A673 (cell line): ENCODE measurements at regions of chr5 and their contacts with region 1.

Region 1: GRCh38 chr5:134637161-134637582 is 4.5 kb upstream of the SAR1B start:
- DNase-seq: no peak
- H3K4me3 ChIP-seq: no peak overlapping the region
- H3K27ac ChIP-seq: no peak overlapping the region
- H3K4me1 ChIP-seq: no peaks in the 10 kb centered on the region
- H3K27me3 ChIP-seq: no peaks in the 10 kb centered on the region
- CTCF ChIP-seq: no peak

Region 2: GRCh38 chr5:134541736-134542376 is 95.3 kb before region 1 on chr5:
- CTCF ChIA-PET with region 1: no interaction called
- POLR2A ChIA-PET with region 1: no interaction called
- intact Hi-C with region 1: no loop called
- DNase-seq: no peak
- H3K4me3 ChIP-seq: no peak overlapping the region
- H3K27ac ChIP-seq: no peak overlapping the region
- H3K4me1 ChIP-seq: peaks cover 24% of the 10 kb centered on the region
- H3K27me3 ChIP-seq: no peaks in the 10 kb centered on the region
- CTCF ChIP-seq: no peak

Region 3: GRCh38 chr5:134648425-134649162 is 11.4 kb after region 1 on chr5 and contains the start of gene SEC24A:
- CTCF ChIA-PET with region 1: no interaction called
- POLR2A ChIA-PET with region 1: no interaction called
- intact Hi-C with region 1: loop called (anchors 1 kb)
- DNase-seq: peak; percentile 90
- H3K4me3 ChIP-seq: peak within 1 kb of the TSS; percentile 79
- H3K27ac ChIP-seq: peak within 1 kb of the TSS; percentile 84
- H3K4me1 ChIP-seq: no peaks in the 10 kb centered on the region
- H3K27me3 ChIP-seq: no peaks in the 10 kb centered on the region
- CTCF ChIP-seq: no peak
- total RNA-seq, gene SEC24A: 22.0 TPM in 2 replicates